ENCODE measurements at regions of chr2 and their contacts with region 1.

Region 1: DNA sequence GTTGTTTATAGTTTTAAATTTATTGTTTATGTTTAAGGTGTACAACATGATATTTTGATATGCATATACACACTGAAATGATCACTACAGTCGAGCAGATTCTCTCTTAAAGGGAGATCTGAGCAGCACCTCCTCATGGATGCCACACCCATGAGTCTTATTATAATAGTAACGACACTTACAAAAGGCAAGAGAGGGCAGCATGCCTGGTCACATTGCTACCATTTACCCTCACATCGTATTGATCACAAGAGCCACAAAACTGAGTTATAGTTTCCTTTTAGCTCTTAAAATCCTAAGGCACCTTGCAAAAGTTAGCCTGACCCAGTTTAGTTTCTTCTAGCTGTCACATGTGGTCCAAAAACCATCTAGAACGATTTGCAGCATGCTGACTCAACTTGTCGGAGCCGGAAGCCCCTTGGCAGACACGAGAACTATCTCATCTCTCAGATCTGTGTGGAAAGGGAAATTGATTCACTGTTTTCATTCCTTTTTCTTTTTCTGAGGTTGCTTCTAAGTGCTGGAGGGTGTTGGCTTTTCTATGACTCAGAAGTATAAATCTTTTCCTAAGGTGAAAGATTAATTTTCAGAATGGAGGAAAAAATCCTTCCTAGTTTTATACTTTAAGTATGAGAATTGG is 85.3 kb downstream of the CDC42EP3 start:
- DNase-seq: peak; percentile 77
- ATAC-seq: peak; percentile 89
- H3K4me3 Mint-ChIP-seq: peak overlapping the region; percentile 48
- H3K27ac Mint-ChIP-seq: peak overlapping the region; percentile 83
- H3K4me1 Mint-ChIP-seq: peaks cover 81% of the 10 kb centered on the region
- H3K27me3 Mint-ChIP-seq: no peaks in the 10 kb centered on the region

Region 2: DNA sequence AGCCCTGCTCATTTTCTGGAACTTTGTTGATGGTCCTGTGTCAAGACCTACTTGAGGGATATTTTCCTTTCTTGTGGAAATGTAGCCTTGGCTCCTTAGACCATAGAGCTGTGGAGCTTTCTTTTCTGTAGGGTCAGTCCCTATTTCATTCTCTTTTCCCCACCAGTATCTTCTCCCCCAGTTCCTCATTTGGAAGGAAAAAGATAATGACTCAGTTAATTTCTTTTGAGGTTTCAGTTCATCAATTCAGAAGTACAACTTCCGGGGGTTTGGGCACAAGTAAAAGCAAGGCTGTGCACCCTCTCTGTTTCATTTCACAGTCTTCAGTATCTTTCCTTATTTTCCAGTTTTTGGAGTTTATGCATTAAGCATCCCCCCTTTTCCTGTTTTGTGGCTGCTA is 14.6 kb after region 1 on chr2:
- CTCF ChIA-PET with region 1: interaction called, 10 read pairs
- POLR2A ChIA-PET with region 1: interaction called, 10 read pairs
- DNase-seq: no peak
- ATAC-seq: no peak
- H3K4me3 Mint-ChIP-seq: peak overlapping the region; percentile 75
- H3K27ac Mint-ChIP-seq: peak overlapping the region; percentile 86
- H3K4me1 Mint-ChIP-seq: peaks cover 58% of the 10 kb centered on the region
- H3K27me3 Mint-ChIP-seq: no peaks in the 10 kb centered on the region

Region 3: DNA sequence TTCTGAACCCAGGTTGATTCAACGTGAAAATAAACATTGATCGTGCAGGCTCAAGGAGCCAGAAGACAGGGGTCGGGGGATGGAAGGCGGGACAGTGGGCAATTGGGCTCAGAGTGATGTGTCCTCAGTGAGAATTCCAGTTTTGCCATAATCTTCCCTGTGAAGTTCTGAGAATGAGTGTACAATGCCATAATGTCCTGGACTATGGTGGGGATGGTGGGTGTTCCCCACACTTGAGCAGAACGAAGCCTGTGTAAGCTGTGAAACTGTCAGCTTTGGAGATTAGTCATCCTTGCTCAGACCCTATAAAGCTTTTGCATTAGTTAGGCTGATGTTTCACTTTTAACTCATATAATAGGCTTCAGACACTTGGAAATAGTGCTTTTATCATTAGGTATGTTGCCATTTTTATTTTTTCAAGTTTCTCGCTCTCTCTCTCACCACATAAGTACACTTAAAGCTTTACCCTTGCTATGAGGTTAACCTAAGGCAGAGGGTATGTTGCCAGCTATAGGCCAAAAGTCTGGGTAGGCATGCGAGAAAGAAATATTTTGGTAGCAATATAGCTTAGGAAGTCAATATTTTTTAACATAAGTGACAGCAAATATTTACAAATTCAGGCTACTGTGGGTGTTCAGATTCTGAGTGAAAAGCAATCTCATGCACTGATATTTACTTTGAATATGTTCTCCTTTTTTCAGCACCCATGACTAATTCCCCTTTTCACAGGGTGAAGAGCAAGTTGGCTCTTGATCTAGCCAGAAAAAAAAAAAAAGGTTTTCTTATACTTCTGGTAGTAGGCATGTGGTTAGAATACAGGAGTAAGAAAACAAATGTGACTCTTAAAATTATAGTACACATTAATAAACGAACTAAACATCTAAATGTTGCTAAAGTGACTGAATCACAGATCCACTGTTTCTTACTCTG is 38.1 kb after region 1 on chr2:
- CTCF ChIA-PET with region 1: interaction called, 17 read pairs
- POLR2A ChIA-PET with region 1: interaction called, 11 read pairs
- DNase-seq: peak; percentile 38
- ATAC-seq: peak; percentile 71
- H3K4me3 Mint-ChIP-seq: peak overlapping the region; percentile 11
- H3K27ac Mint-ChIP-seq: peak overlapping the region; percentile 64
- H3K4me1 Mint-ChIP-seq: peaks cover 48% of the 10 kb centered on the region
- H3K27me3 Mint-ChIP-seq: no peaks in the 10 kb centered on the region

Measured in activated CD8-positive, alpha-beta T cell treated with anti-CD3 and anti-CD28 coated beads, Interleukin-2, amount 10 ng/mL, durations not matched to agents 7 days and 5 days (primary cell).